ENCODE measurements at regions of chr15 and their contacts with region 1.

Region 1: DNA sequence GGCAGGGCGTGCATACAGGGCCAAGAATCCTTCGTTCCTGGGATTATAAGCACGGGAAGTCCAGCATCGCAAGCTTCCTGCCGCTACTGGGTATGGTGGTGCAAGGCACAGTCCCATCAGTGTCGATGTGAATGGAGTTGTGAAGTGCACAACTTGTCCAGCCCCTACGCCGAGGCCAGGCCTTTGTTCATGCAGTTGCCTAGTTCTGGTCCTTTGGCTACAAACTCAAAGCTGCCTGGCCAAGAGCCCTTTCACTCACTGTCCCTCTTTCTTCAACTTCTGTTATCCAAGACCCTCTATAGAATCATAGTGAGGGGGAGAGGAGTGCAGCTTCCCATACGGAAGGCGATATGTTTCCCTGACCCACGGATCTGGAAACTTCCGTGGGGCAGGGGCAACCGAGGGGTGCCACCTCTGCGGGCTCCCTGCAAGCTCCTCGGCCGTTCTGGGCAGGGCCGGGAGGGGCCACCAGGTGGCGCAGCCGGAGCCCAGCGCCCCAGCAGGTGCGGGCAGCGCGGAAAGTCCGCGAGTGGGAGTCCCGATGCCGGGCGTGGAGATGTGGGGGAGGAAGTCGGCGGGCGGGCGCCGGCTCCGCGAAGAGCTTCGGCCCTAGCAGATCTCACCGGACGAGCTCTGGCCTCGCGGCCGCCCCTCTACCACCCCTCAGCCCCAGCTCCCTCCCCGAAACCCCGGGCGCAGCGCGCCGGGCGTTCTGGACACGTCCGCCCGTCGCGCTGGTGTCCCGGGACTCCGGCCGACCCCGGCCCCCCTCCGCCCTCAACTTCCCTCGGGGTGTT is 693 bp downstream of the RASGRP1 start:
- DNase-seq: peak; percentile 80 to 89 (median 83)
- H3K4me3 ChIP-seq: peak overlapping the region; percentile 90
- H3K4me3 Mint-ChIP-seq: peak overlapping the region; percentile 96 to 99 (median 97)
- H3K27ac ChIP-seq: peak overlapping the region; percentile 80
- H3K27ac Mint-ChIP-seq: peak overlapping the region; percentile 82 to 98 (median 90)
- H3K4me1 ChIP-seq: peaks cover 57% of the 10 kb centered on the region
- H3K4me1 Mint-ChIP-seq: peaks cover 60 to 63% (median 62%) of the 10 kb centered on the region in 3 donors
- H3K27me3 ChIP-seq: no peaks in the 10 kb centered on the region
- H3K27me3 Mint-ChIP-seq: no peaks in the 10 kb centered on the region

Region 2: GRCh38 chr15:38294126-38294525 is 269.8 kb before region 1 on chr15:
- CTCF ChIA-PET with region 1: no interaction called
- POLR2A ChIA-PET with region 1: no interaction called
- DNase-seq: no peak
- H3K4me3 ChIP-seq: no peak overlapping the region
- H3K4me3 Mint-ChIP-seq: no peak overlapping the region
- H3K27ac ChIP-seq: no peak overlapping the region
- H3K27ac Mint-ChIP-seq: no peak overlapping the region
- H3K4me1 ChIP-seq: no peaks in the 10 kb centered on the region
- H3K4me1 Mint-ChIP-seq: no peaks in the 10 kb centered on the region
- H3K27me3 ChIP-seq: no peaks in the 10 kb centered on the region
- H3K27me3 Mint-ChIP-seq: peaks cover 0 to 4% of the 10 kb centered on the region in 2 donors

Region 3: DNA sequence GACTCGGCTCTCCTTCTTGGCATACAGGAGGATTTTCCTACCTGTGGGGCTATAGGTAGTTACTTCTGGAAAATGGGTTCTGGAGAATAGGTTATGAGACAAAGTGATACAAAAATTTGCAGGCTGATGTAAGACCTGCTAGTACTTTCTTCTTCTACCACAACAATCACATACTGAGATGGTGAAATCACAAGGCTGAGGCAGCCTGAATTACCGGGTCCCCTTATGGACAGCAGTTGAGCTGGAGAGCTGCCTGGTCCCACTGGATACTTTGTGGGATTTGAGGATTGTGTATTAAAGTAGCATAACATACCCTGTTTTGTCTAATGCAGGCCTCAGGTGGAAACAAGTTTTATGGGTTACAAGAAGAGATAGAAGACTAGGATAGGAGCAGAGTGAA is 196.4 kb before region 1 on chr15:
- CTCF ChIA-PET with region 1: no interaction called
- POLR2A ChIA-PET with region 1: no interaction called
- DNase-seq: no peak
- H3K4me3 ChIP-seq: no peak overlapping the region
- H3K4me3 Mint-ChIP-seq: no peak overlapping the region
- H3K27ac ChIP-seq: no peak overlapping the region
- H3K27ac Mint-ChIP-seq: no peak overlapping the region
- H3K4me1 ChIP-seq: no peaks in the 10 kb centered on the region
- H3K4me1 Mint-ChIP-seq: no peaks in the 10 kb centered on the region
- H3K27me3 ChIP-seq: no peaks in the 10 kb centered on the region
- H3K27me3 Mint-ChIP-seq: peaks cover 3 to 46% of the 10 kb centered on the region in 2 donors

Region 4: DNA sequence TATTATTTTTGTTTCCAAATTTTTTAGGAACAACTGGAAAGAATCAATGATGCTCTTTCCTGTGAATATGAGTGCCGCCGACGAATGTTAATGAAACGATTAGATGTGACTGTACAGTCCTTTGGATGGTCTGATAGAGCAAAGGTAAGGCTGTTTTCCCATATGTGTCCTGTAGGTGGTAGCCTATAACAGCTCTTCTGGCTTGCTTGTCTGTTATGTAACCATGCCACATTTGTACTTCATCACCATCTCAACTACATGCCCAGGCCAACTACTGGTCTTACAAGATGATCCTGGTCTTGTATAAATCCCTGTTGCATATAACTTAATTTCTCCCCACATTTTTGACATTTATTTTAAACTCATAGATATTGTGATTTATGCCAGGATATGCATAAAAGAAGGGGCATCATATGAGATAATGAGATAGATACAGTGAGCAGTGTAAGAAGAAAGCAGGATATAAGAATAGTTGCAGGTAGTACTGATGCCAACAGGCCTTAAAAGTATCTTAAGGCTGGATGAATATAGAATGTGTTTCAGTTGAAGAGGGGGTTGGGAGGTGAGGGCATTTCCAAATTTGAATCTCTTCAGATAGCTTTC is 89.7 kb before region 1 on chr15:
- CTCF ChIA-PET with region 1: interaction called, 12 read pairs
- POLR2A ChIA-PET with region 1: interaction called, 3 read pairs
- DNase-seq: peak in 4 of 5 donors; percentile 12 to 64 (median 62)
- H3K4me3 ChIP-seq: no peak overlapping the region
- H3K4me3 Mint-ChIP-seq: no peak overlapping the region
- H3K27ac ChIP-seq: no peak overlapping the region
- H3K27ac Mint-ChIP-seq: peak overlapping the region in 7 of 8 donors; percentile 6 to 89 (median 76)
- H3K4me1 ChIP-seq: peaks cover 7% of the 10 kb centered on the region
- H3K4me1 Mint-ChIP-seq: peaks cover 7 to 8% (median 8%) of the 10 kb centered on the region in 3 donors
- H3K27me3 ChIP-seq: no peaks in the 10 kb centered on the region
- H3K27me3 Mint-ChIP-seq: no peaks in the 10 kb centered on the region

Region 5: DNA sequence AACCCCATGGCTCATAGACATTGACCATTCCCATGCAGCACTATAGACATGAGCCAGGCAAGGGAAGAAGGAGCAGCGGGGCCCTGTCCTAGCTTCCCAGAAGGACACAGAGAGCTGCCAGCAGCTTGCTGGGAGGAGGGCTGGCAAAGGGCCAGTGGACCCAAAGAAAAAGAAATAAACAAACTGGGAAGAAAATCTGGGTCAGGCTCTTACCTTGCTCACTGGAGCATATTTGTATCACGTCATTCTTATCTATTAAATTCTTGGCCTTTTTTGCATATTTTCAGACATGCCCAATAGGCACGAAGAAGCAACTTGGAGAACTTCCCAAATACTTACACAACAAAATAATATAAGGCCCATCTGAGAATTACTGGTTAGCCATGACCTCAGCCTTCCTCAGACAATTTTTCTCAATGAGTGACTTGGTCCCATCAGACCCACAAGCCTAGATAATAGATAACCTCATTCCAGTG is 27.7 kb before region 1 on chr15:
- CTCF ChIA-PET with region 1: interaction called, 33 read pairs
- POLR2A ChIA-PET with region 1: interaction called, 4 read pairs
- DNase-seq: no peak
- H3K4me3 ChIP-seq: no peak overlapping the region
- H3K4me3 Mint-ChIP-seq: peak overlapping the region in 4 of 7 donors; percentile 9 to 72 (median 43)
- H3K27ac ChIP-seq: no peak overlapping the region
- H3K27ac Mint-ChIP-seq: peak overlapping the region in 7 of 8 donors; percentile 78 to 95 (median 88)
- H3K4me1 ChIP-seq: peaks cover 96% of the 10 kb centered on the region
- H3K4me1 Mint-ChIP-seq: peaks cover 97 to 100% (median 100%) of the 10 kb centered on the region in 3 donors
- H3K27me3 ChIP-seq: no peaks in the 10 kb centered on the region
- H3K27me3 Mint-ChIP-seq: no peaks in the 10 kb centered on the region

Region 6: DNA sequence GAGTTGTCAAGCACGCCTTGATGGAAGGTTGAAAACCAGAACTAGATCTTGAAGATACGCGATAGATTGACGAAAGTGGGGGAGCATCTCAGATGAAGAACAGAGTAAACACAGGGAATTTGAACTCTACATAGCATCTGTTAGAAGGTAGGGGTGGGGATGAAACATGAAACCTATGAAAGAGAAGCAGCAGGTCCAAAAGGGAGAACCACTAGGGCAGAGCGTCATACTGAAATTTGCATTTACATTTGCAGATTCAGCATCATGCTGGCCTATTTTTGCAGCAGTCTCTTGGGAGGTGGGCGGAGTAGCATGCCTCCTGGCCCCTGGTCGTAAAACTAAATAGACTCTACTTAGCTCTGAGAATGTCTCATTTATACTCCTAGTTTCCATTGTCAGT is 46.8 kb after region 1 on chr15:
- CTCF ChIA-PET with region 1: interaction called, 28 read pairs
- POLR2A ChIA-PET with region 1: interaction called, 7 read pairs
- DNase-seq: peak in 2 of 5 donors; percentile 17 to 24
- H3K4me3 ChIP-seq: peak overlapping the region; percentile 5
- H3K4me3 Mint-ChIP-seq: peak overlapping the region; percentile 6 to 85 (median 71)
- H3K27ac ChIP-seq: no peak overlapping the region
- H3K27ac Mint-ChIP-seq: peak overlapping the region; percentile 82 to 98 (median 91)
- H3K4me1 ChIP-seq: peaks cover 44% of the 10 kb centered on the region
- H3K4me1 Mint-ChIP-seq: peaks cover 57 to 65% (median 59%) of the 10 kb centered on the region in 3 donors
- H3K27me3 ChIP-seq: no peaks in the 10 kb centered on the region
- H3K27me3 Mint-ChIP-seq: no peaks in the 10 kb centered on the region

Region 7: GRCh38 chr15:38647683-38648082 is 83.8 kb after region 1 on chr15:
- CTCF ChIA-PET with region 1: interaction called, 137 read pairs
- POLR2A ChIA-PET with region 1: interaction called, 51 read pairs
- DNase-seq: no peak
- H3K4me3 ChIP-seq: no peak overlapping the region
- H3K4me3 Mint-ChIP-seq: peak overlapping the region in 1 of 7 donors; percentile 12
- H3K27ac ChIP-seq: no peak overlapping the region
- H3K27ac Mint-ChIP-seq: peak overlapping the region; percentile 50 to 87 (median 74)
- H3K4me1 ChIP-seq: peaks cover 80% of the 10 kb centered on the region
- H3K4me1 Mint-ChIP-seq: peaks cover 74 to 86% (median 84%) of the 10 kb centered on the region in 3 donors
- H3K27me3 ChIP-seq: no peaks in the 10 kb centered on the region
- H3K27me3 Mint-ChIP-seq: no peaks in the 10 kb centered on the region

Region 8: DNA sequence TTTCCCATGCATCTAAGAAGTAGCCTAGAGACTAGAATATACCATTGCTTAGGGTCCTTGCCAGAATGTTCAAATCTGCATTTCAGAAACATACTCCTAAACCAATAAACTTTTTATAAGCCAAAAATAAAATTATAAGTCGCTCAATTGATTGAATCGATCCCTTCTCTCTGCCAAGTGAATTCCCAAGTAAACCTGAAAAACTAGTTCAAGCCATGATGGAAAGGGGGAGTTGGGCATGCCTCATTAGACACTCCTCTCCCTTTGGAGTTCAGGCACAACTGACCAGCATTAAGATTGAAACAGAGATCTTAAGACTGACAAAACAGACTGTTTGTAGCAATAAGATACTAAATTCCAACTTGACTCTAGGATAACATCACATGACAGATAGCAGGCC is 114.3 kb after region 1 on chr15:
- CTCF ChIA-PET with region 1: interaction called, 153 read pairs
- POLR2A ChIA-PET with region 1: interaction called, 26 read pairs
- DNase-seq: no peak
- H3K4me3 ChIP-seq: no peak overlapping the region
- H3K4me3 Mint-ChIP-seq: no peak overlapping the region
- H3K27ac ChIP-seq: no peak overlapping the region
- H3K27ac Mint-ChIP-seq: peak overlapping the region in 1 of 8 donors; percentile 68
- H3K4me1 ChIP-seq: peaks cover 23% of the 10 kb centered on the region
- H3K4me1 Mint-ChIP-seq: peaks cover 28 to 56% (median 53%) of the 10 kb centered on the region in 3 donors
- H3K27me3 ChIP-seq: no peaks in the 10 kb centered on the region
- H3K27me3 Mint-ChIP-seq: no peaks in the 10 kb centered on the region

Region 9: DNA sequence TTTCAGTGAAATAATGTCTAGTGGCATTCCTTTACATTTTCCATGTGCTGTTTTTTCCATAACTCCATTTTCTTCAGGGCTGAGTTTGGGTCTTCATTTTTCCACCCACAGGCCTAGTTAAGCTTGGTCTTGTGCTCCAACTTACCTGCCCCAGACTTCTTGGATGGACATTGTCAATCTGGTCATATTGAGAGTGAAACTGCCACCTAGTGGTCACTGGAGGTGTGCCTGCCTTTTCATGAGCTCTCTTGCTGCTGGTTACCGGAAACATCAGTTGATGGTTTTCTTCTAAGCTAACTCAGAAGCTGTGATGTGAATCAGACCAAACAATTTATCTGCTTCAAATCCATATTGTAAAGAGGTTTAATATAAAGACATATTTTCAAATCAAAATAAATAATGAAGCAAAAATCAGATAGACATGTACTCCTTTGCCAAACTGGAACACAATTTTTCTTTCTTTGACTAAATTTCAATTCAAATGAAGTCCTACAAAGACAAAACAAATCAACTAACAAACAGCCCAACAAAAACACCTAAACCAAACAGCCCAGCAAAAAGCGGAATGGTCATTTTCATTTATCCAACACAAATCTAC is 135.8 kb after region 1 on chr15:
- CTCF ChIA-PET with region 1: interaction called, 110 read pairs
- POLR2A ChIA-PET with region 1: interaction called, 3 read pairs
- DNase-seq: peak; percentile 39 to 76 (median 59)
- H3K4me3 ChIP-seq: no peak overlapping the region
- H3K4me3 Mint-ChIP-seq: peak overlapping the region in 5 of 7 donors; percentile 3 to 37 (median 30)
- H3K27ac ChIP-seq: no peak overlapping the region
- H3K27ac Mint-ChIP-seq: peak overlapping the region; percentile 64 to 91 (median 80)
- H3K4me1 ChIP-seq: peaks cover 52% of the 10 kb centered on the region
- H3K4me1 Mint-ChIP-seq: peaks cover 53 to 57% (median 56%) of the 10 kb centered on the region in 3 donors
- H3K27me3 ChIP-seq: no peaks in the 10 kb centered on the region
- H3K27me3 Mint-ChIP-seq: peaks cover 0 to 3% of the 10 kb centered on the region in 2 donors

Region 10: DNA sequence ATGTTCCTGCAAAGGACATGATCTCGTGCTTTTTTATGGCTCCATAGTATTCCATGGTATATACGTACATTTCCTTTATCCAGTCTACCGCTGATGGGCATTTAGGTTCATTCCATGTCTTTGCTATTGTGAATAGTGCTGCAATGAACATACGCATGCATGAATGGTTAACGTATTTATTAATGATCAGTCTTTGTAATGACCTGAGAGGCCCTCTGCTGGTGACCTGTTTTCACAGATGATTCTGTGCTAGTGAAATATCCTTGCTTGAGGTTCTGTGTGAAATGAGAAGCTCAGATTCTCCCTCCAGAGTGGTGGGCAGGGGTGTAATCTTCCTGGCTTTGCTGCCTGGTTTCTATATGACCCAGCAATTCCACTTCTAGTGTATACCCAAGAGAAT is 160.9 kb after region 1 on chr15:
- CTCF ChIA-PET with region 1: no interaction called
- POLR2A ChIA-PET with region 1: no interaction called
- DNase-seq: no peak
- H3K4me3 ChIP-seq: no peak overlapping the region
- H3K4me3 Mint-ChIP-seq: no peak overlapping the region
- H3K27ac ChIP-seq: no peak overlapping the region
- H3K27ac Mint-ChIP-seq: no peak overlapping the region
- H3K4me1 ChIP-seq: no peaks in the 10 kb centered on the region
- H3K4me1 Mint-ChIP-seq: no peaks in the 10 kb centered on the region
- H3K27me3 ChIP-seq: no peaks in the 10 kb centered on the region
- H3K27me3 Mint-ChIP-seq: peaks cover 0 to 3% of the 10 kb centered on the region in 2 donors